Transverse colon (tissue), 4 donors: ENCODE measurements at regions of chr6 and their contacts with region 1.

Region 1: DNA sequence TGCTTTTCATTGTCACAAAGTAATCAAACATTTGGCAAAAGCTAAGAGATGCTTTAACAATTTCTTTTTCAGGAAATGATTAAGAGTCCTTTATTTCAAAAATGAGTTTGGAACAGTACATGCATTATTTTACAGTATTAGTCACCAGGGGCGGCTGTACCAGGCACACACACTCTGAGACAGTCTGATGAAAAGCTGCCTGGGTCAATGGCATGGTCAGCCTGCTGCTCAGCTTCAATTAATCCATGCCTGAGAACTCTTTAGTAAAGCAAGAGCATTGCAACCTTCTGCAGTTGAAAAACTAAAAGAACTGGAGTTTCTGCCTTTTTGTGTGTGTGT is 105.5 kb downstream of the TULP4 start:
- DNase-seq: no peak
- H3K4me3 ChIP-seq: no peak overlapping the region
- H3K27ac ChIP-seq: no peak overlapping the region
- H3K4me1 ChIP-seq: no peaks in the 10 kb centered on the region
- H3K27me3 ChIP-seq: no peaks in the 10 kb centered on the region
- CTCF ChIP-seq: no peak
- EP300 ChIP-seq: no peak
- POLR2A ChIP-seq: no peak

Region 2: DNA sequence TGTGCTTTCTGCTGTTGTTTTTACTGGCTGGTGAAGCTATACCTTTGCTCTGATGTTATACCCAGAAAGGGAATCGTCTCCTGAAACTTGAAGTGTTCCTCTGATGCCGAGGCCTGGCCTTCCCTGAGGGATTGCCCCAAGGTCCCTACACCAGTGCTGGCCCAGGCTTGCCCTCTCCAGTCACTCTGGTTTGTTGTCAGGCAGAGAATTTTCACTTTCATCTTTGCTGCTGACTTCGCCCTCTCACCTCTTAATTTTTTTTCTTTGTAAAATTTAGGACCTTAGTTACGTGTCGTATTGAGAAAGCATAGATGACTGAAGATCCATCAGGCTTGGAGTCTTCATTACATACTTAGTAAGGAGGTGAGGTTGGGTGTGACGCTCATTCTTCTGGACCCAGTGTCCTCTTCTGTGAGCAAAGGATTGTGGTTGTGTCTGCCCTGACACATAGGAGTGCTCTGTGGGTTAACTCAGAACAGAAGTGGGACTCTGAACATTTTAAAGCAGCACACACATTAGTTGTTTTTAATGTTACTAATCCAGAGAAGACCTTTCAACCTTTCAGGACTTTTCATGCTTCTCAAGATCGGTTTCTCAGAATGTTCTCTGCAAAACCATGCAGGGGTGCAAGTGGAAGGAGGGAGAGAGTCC is 60.0 kb before region 1 on chr6:
- in situ Hi-C with region 1: no loop called
- intact Hi-C with region 1: no loop called
- DNase-seq: no peak
- H3K4me3 ChIP-seq: no peak overlapping the region
- H3K27ac ChIP-seq: no peak overlapping the region
- H3K4me1 ChIP-seq: peaks cover 0 to 21% (median 8%) of the 10 kb centered on the region in 4 donors
- H3K27me3 ChIP-seq: no peaks in the 10 kb centered on the region
- CTCF ChIP-seq: no peak
- EP300 ChIP-seq: no peak
- POLR2A ChIP-seq: no peak

Region 3: DNA sequence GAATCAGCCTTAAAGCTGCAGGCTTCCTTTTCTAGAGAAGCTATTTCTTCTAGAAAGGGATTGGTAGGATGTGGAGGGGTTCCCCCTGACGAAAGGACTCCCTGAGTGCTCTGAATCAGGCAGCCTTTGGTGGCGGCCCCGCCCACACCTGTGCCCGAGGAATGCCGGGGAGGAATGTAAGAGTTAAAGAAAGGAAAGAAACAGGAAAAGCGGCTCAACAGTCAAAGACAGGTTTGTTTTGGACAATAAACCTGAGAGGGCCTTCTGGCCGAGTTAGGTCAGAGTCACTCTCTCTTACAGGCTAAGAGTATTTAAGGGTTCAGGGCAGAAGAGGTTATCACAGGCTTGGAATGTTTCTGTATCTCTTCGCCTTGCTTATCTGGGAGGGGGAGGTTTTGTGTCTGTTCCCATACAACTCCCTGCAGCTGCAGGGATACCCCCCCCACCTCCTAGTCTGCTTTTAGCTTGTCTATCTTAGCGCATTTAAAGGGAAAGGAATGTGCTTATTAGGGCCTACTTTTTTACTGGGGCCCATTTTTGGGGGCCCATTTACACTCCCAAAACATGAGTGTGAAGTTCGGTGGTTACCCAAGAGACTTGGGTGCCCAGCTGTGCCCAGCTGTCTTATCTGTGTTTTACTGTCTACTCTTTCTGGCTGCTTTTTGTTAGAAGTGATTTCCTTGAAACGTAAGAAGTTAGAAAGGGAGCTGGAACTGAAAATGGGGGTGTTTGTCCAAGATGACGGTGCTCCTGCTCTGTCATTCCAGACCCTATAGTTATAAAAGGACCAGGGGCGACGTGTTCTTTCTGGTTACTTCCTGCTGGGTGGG is 194.0 kb after region 1 on chr6:
- in situ Hi-C with region 1: no loop called
- intact Hi-C with region 1: no loop called
- DNase-seq: no peak
- H3K4me3 ChIP-seq: no peak overlapping the region
- H3K27ac ChIP-seq: no peak overlapping the region
- H3K4me1 ChIP-seq: no peaks in the 10 kb centered on the region
- H3K27me3 ChIP-seq: no peaks in the 10 kb centered on the region
- CTCF ChIP-seq: no peak
- EP300 ChIP-seq: no peak
- POLR2A ChIP-seq: no peak

Region 4: GRCh38 chr6:158923805-158924498 is 506.2 kb after region 1 on chr6:
- in situ Hi-C with region 1: no loop called
- intact Hi-C with region 1: loop called (anchors 5 kb)
- DNase-seq: peak; percentile 65
- H3K4me3 ChIP-seq: no peak overlapping the region
- H3K27ac ChIP-seq: peak overlapping the region; percentile 1 to 59 (median 51)
- H3K4me1 ChIP-seq: peaks cover 0 to 3% (median 0%) of the 10 kb centered on the region in 4 donors
- H3K27me3 ChIP-seq: no peaks in the 10 kb centered on the region
- CTCF ChIP-seq: no peak
- EP300 ChIP-seq: no peak
- POLR2A ChIP-seq: no peak